Naive thymus-derived CD4-positive, alpha-beta T cell (primary cell): ENCODE measurements at regions of chr5 and their contacts with region 1.

Region 1: DNA sequence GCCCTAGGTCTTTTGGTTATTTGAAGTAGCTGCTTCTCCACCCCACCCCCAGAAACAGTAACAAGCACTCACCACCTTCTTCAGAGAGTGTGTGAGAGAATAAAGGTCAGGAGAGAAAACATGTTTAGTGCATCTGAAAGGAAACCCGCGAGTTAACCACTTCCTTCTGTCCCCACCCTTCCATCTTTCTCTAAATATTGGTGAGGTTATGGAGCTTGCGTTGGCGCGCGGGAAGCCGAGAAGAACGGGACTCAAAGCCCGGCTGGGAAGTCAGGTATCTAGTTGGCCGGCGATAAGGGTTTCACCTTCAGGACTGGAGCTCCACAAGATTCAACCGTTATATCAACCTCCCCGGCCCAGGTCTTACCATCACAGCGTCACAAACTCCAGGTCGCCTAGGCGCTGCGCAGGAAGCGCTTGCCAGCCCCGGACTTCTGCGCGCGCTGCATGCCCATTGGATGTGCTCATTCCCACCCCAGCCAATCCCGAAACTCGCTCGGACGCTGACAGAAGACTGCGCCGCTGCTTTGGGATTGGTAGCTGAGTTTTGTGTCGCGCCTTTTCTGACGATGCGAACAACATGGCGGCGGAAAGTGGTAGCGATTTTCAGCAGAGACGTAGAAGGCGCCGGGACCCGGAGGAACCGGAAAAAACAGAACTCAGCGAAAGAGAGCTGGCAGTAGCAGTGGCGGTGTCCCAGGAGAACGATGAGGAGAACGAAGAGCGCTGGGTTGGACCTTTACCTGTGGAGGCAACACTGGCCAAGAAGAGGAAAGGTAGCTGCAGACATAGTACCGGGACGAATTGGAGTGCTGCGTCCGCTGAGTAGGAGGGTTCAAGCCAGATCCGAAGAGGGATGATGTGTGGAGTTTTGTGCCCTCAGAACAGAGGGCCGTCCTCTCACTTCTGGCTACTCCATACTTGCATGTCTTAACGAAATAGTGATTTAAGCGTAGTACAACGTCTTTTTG is at the starts of genes CENPK and PPWD1:
- DNase-seq: peak; percentile 83 to 97 (median 94)
- ATAC-seq: peak; percentile 99
- H3K4me3 ChIP-seq: peak within 1 kb of the TSS; percentile 93
- H3K4me3 Mint-ChIP-seq: peak within 1 kb of the TSS; percentile 92 to 99 (median 96)
- H3K27ac ChIP-seq: peak within 1 kb of the TSS; percentile 93
- H3K27ac Mint-ChIP-seq: peak within 1 kb of the TSS; percentile 97 to 100 (median 98)
- H3K4me1 ChIP-seq: peaks cover 30% of the 10 kb centered on the region in 2 donors
- H3K4me1 Mint-ChIP-seq: peaks cover 22 to 79% (median 59%) of the 10 kb centered on the region in 7 donors
- H3K27me3 ChIP-seq: no peaks in the 10 kb centered on the region
- H3K27me3 Mint-ChIP-seq: no peaks in the 10 kb centered on the region
- total RNA-seq, gene CENPK: 7.2 to 78.8 (median 14.1) TPM
- total RNA-seq, gene PPWD1: 61.7 to 104 (median 81.2) TPM

Region 2: GRCh38 chr5:64634997-64635686 is 927.9 kb before region 1 on chr5:
- CTCF ChIA-PET with region 1: no interaction called
- POLR2A ChIA-PET with region 1: no interaction called
- intact Hi-C with region 1: loop called in 1 of 2 experiments (anchors 1 kb)
- DNase-seq: peak in 6 of 9 donors; percentile 2 to 41 (median 35)
- ATAC-seq: peak; percentile 60
- H3K4me3 ChIP-seq: no peak overlapping the region
- H3K4me3 Mint-ChIP-seq: no peak overlapping the region
- H3K27ac ChIP-seq: no peak overlapping the region
- H3K27ac Mint-ChIP-seq: no peak overlapping the region
- H3K4me1 ChIP-seq: no peaks in the 10 kb centered on the region
- H3K4me1 Mint-ChIP-seq: peaks cover 0 to 9% (median 0%) of the 10 kb centered on the region in 7 donors
- H3K27me3 ChIP-seq: peaks cover 0 to 3% of the 10 kb centered on the region in 2 donors
- H3K27me3 Mint-ChIP-seq: peaks cover 15 to 28% (median 21%) of the 10 kb centered on the region in 5 donors

Region 3: GRCh38 chr5:64811050-64811640 is 751.9 kb before region 1 on chr5:
- CTCF ChIA-PET with region 1: no interaction called
- POLR2A ChIA-PET with region 1: no interaction called
- intact Hi-C with region 1: loop called in 1 of 2 experiments (anchors 1 kb)
- DNase-seq: peak in 7 of 9 donors; percentile 1 to 38 (median 21)
- ATAC-seq: peak; percentile 50
- H3K4me3 ChIP-seq: no peak overlapping the region
- H3K4me3 Mint-ChIP-seq: no peak overlapping the region
- H3K27ac ChIP-seq: no peak overlapping the region
- H3K27ac Mint-ChIP-seq: peak overlapping the region in 1 of 9 donors; percentile 33
- H3K4me1 ChIP-seq: no peaks in the 10 kb centered on the region
- H3K4me1 Mint-ChIP-seq: peaks cover 0 to 3% (median 0%) of the 10 kb centered on the region in 7 donors
- H3K27me3 ChIP-seq: no peaks in the 10 kb centered on the region
- H3K27me3 Mint-ChIP-seq: no peaks in the 10 kb centered on the region

Region 4: GRCh38 chr5:65102828-65103711 is 459.9 kb before region 1 on chr5:
- CTCF ChIA-PET with region 1: no interaction called
- POLR2A ChIA-PET with region 1: no interaction called
- intact Hi-C with region 1: loop called in 1 of 2 experiments (anchors 1 kb)
- DNase-seq: peak; percentile 44 to 67 (median 57)
- ATAC-seq: peak; percentile 78
- H3K4me3 ChIP-seq: peak overlapping the region; percentile 63
- H3K4me3 Mint-ChIP-seq: peak overlapping the region; percentile 82 to 93 (median 87)
- H3K27ac ChIP-seq: peak overlapping the region; percentile 82
- H3K27ac Mint-ChIP-seq: peak overlapping the region; percentile 83 to 96 (median 92)
- H3K4me1 ChIP-seq: peaks cover 12% of the 10 kb centered on the region in 2 donors
- H3K4me1 Mint-ChIP-seq: peaks cover 32 to 52% (median 41%) of the 10 kb centered on the region in 7 donors
- H3K27me3 ChIP-seq: no peaks in the 10 kb centered on the region
- H3K27me3 Mint-ChIP-seq: peaks cover 0 to 22% (median 0%) of the 10 kb centered on the region in 5 donors

Region 5: DNA sequence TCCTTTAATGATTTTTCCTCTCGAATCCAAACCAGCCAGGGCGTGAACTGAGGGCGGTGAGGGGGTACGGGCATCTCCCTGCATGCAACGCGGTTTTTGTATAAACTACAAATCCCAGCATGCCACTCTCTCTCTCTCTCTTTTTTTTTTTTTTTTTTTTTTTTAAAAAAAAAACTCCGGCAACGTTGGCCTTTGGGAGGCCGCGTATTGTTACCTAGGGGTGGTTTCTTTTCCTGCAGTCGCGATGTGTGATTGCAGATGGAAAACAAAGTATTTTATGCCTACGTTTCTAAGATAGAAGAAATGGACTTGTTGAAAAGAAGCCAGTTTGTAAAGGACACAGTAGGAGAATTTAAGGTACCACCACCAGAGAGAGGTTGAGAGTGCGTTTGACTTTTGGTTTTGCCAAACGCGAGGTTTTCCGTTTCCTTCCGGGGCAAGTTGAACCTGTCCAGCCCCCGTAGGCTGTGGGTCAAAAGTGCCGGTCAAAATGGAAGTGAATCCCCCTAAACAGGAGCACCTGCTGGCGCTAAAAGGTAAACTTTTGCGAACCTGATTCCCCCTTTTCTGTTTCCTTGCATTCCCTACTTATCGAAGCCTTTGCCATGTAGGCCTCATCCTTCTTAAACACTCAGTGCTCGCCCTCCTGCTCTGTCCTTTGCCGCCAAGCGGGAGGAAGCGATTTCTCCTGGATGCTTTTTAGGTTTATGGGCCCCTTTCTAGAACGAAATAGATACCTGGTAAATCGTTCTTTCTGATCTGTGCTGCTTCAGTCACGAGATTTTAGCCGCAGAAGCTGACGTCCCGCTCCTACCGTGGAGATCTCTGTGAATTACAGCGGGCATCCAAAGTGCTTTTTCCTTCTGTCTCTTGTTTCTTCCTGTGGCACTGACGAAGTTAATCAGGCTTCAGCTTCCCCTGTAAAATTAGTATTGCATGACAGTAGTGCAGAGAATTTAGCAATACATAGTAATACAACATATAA is 61.8 kb after region 1 on chr5 and contains the starts of genes SHLD3 and TRAPPC13:
- CTCF ChIA-PET with region 1: no interaction called
- POLR2A ChIA-PET with region 1: interaction called, 22 read pairs
- intact Hi-C with region 1: loop called (anchors 1 kb)
- DNase-seq: peak; percentile 57 to 92 (median 91)
- ATAC-seq: peak; percentile 86
- H3K4me3 ChIP-seq: peak within 1 kb of the TSS; percentile 75
- H3K4me3 Mint-ChIP-seq: peak within 1 kb of the TSS; percentile 93 to 100 (median 98)
- H3K27ac ChIP-seq: peak within 1 kb of the TSS; percentile 92
- H3K27ac Mint-ChIP-seq: peak within 1 kb of the TSS; percentile 97 to 100 (median 98)
- H3K4me1 ChIP-seq: peaks cover 20% of the 10 kb centered on the region in 2 donors
- H3K4me1 Mint-ChIP-seq: peaks cover 14 to 73% (median 51%) of the 10 kb centered on the region in 7 donors
- H3K27me3 ChIP-seq: no peaks in the 10 kb centered on the region
- H3K27me3 Mint-ChIP-seq: peaks cover 0 to 3% (median 0%) of the 10 kb centered on the region in 5 donors
- total RNA-seq, gene SHLD3: 4.8 to 11.3 (median 5.8) TPM
- total RNA-seq, gene TRAPPC13: 18.2 to 23.1 (median 20.8) TPM